Thyroid gland (tissue), 4 donors: ENCODE measurements at regions of chr3 and their contacts with region 1.

Region 1: GRCh38 chr3:142993958-142994442 is 7.4 kb upstream of the U2SURP start:
- DNase-seq: peak; percentile 53 to 72
- H3K4me3 ChIP-seq: no peak overlapping the region
- H3K27ac ChIP-seq: no peak overlapping the region
- H3K4me1 ChIP-seq: no peaks in the 10 kb centered on the region
- H3K27me3 ChIP-seq: no peaks in the 10 kb centered on the region
- CTCF ChIP-seq: peak; percentile 38 to 66 (median 55)
- POLR2A ChIP-seq: no peak

Region 2: DNA sequence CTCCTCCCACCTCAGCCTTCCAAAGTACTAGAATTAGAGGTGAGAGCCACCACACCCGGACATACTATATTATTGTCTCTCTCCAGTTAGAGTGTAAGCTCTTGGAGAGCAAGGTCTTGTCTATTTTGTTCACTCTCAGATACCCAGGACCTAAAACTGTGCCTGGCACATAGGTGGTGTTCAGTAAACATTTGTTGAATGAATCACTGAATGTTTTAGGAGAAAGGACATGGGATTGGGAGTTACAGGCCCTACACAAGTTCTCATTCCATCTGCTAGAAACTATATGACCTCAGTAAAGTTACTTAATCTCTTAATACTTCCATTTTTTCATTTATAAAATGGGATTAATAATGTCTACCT is 414.0 kb before region 1 on chr3:
- intact Hi-C with region 1: loop called (anchors 5 kb)
- DNase-seq: no peak
- H3K4me3 ChIP-seq: no peak overlapping the region
- H3K27ac ChIP-seq: no peak overlapping the region
- H3K4me1 ChIP-seq: peaks cover 0 to 16% of the 10 kb centered on the region in 2 donors
- H3K27me3 ChIP-seq: no peaks in the 10 kb centered on the region
- CTCF ChIP-seq: no peak
- POLR2A ChIP-seq: no peak

Region 3: DNA sequence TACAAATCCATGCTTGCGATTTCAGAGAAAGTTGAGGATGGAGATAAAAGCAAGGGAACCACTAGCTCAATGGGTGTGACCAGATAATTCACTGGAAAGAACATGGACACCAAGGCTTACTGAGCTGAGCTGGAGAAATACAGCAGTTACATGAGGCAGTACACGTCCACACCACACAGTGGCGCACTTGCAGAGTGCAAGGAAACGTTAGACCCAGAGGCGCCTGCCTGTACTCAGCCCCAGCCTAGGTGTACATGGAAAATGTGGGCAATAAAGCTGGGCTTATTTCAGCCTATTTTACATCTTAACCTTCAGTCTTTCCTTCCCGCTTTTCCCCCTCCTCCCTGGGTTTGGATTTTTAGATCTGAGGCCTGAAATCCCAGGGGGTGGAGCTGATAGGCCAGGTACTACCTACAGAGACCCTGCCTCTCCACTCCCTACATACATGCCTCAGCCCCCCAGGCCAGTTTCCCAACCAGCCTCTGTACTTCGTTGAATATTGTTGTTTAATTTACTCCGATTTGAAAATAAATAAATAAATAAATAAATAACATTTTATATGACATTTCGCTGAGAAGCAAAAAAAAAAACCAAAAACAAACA is 165.2 kb before region 1 on chr3:
- intact Hi-C with region 1: loop called (anchors 10 kb)
- DNase-seq: peak; percentile 74 to 79
- H3K4me3 ChIP-seq: no peak overlapping the region
- H3K27ac ChIP-seq: no peak overlapping the region
- H3K4me1 ChIP-seq: no peaks in the 10 kb centered on the region
- H3K27me3 ChIP-seq: no peaks in the 10 kb centered on the region
- CTCF ChIP-seq: peak in 5 of 6 experiments; percentile 54 to 75 (median 70)
- POLR2A ChIP-seq: no peak